Esophagus muscularis mucosa (tissue), 4 donors: ENCODE measurements at regions of chr5 and their contacts with region 1.

Region 1: GRCh38 chr5:110757118-110757729 is 18.4 kb downstream of the SLC25A46 start:
- DNase-seq: no peak
- H3K4me3 ChIP-seq: no peak overlapping the region
- H3K27ac ChIP-seq: no peak overlapping the region
- H3K4me1 ChIP-seq: no peaks in the 10 kb centered on the region
- H3K27me3 ChIP-seq: no peaks in the 10 kb centered on the region
- CTCF ChIP-seq: peak; percentile 49 to 72 (median 66)
- EP300 ChIP-seq: no peak
- POLR2A ChIP-seq: no peak

Region 2: DNA sequence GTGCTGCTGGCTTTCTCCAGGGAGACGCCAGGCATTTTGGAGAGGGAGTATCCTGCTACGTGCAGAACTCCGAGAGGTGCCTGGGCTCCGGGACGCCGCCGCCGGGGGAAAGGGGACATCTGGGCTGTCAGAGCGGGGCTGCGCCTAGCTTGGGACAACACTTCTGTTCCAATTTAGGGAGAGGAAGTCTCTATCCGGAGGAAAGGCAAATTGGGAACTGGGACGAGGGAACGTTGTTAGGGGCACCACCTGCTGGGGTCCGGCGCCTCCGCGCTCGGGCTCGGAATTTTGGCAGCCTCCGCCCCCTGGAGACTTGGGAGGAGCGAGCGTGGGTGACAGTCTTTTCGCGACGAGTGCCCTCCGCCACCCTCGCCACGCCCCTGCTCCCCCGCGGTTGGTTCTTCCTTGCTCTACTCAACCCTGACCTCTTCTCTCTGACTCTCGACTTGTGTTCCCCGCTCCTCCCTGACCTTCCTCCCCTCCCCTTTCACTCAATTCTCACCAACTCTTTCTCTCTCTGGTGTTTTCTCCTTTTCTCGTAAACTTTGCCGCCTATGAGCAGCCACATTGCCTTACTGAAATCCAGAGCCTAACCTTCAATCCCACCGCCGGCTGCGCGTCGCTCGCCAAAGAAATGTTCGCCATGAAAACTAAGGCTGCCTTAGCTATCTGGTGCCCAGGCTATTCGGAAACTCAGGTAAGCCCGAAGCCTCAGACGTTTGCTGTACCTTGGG is 315.9 kb after region 1 on chr5:
- intact Hi-C with region 1: loop called (anchors 5 kb)
- DNase-seq: peak; percentile 93
- H3K4me3 ChIP-seq: peak overlapping the region; percentile 58 to 68 (median 63)
- H3K27ac ChIP-seq: peak overlapping the region; percentile 56 to 66 (median 62)
- H3K4me1 ChIP-seq: peaks cover 14 to 49% (median 41%) of the 10 kb centered on the region in 4 donors
- H3K27me3 ChIP-seq: peaks cover 0 to 16% (median 3%) of the 10 kb centered on the region in 4 donors
- CTCF ChIP-seq: peak in 1 of 3 experiments; percentile 11
- EP300 ChIP-seq: no peak
- POLR2A ChIP-seq: no peak

Region 3: GRCh38 chr5:111092062-111092853 is 335.0 kb after region 1 on chr5 and contains the start of gene WDR36:
- intact Hi-C with region 1: loop called (anchors 2 kb)
- DNase-seq: peak; percentile 96
- H3K4me3 ChIP-seq: peak within 1 kb of the TSS; percentile 81 to 94 (median 90)
- H3K27ac ChIP-seq: peak within 1 kb of the TSS; percentile 78 to 88 (median 82)
- H3K4me1 ChIP-seq: peaks cover 15 to 30% (median 28%) of the 10 kb centered on the region in 4 donors
- H3K27me3 ChIP-seq: no peaks in the 10 kb centered on the region
- CTCF ChIP-seq: no peak
- EP300 ChIP-seq: no peak
- POLR2A ChIP-seq: no peak
- total RNA-seq, gene WDR36: 13.7 to 26.3 (median 19.9) TPM